PC-9 (cell line): ENCODE measurements at regions of chr7 and their contacts with region 1.

Region 1: DNA sequence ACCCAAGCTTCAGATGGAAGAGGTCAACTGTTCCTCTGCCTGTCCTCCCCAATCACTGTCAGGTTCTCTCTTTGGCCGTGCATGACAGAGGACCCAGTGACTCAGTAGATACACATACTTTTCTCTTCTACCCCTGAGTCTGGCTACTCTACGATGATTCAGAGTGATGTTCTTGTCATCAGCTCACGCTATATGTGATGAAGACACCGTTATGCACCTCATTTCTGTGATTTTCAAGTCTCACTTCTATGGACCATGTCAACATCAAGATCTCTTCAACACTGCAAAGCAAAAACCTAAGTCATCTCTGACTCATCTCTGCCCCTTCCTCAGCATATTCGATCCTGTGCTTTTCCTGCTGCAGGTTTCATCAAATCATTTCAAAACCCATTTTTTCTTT is 76.6 kb upstream of the DGKI start:
- DNase-seq: no peak
- H3K4me3 ChIP-seq: no peak overlapping the region
- H3K27ac ChIP-seq: no peak overlapping the region
- H3K4me1 ChIP-seq: 0 out of 2 replicates have a peak, but pooled peaks cover 4% of the 10 kb centered on the region
- H3K27me3 ChIP-seq: no peaks in the 10 kb centered on the region
- CTCF ChIP-seq: no peak

Region 2: DNA sequence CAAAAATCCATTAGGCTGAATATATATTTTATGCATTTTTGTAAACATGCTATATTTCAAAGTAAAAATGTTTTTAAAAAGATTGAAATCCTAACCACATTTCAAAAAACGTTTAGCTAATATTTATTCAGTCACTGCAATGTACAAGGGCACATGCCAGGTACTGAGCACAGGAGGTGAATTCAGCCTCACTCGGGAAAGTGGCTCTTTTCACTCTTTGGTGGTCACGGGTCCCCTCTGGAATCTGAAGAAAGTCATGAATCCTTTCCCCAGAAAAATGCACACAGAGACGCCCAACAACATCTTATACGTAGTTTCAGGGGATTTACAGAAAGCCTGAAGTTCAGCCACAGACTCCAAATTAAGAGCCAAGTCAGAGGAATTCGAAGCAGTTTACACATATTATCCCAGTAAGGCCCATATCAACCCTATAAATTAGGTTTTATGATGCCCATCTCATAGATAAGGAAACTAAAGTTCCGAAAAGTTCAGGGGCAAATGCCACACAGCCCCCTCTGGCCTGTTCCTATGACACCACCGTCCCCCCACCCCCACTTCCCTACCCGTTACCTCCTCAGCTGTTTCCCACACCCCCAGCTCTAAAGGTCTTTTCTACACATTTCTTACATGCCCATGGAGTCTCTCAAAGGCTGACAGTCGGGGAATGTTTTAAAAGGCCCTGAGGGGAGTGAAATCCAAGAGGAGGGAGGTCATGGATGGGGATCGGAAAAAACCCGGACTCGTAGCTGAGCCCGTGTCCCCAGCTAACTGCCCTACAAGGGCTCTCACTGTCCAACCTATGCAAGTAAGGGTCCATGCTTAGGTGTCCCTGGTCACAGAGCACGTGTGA is 787.4 kb after region 1 on chr7:
- CTCF ChIA-PET with region 1: interaction called, 10 read pairs
- POLR2A ChIA-PET with region 1: no interaction called
- intact Hi-C with region 1: no loop called
- DNase-seq: no peak
- H3K4me3 ChIP-seq: no peak overlapping the region
- H3K27ac ChIP-seq: no peak overlapping the region
- H3K4me1 ChIP-seq: no peaks in the 10 kb centered on the region
- H3K27me3 ChIP-seq: no peaks in the 10 kb centered on the region
- CTCF ChIP-seq: no peak